ENCODE measurements at regions of chr3 and their contacts with region 1.

Region 1: GRCh38 chr3:159804726-159805410 is 183.8 kb upstream of the IL12A start:
- DNase-seq: peak; percentile 84
- H3K4me3 Mint-ChIP-seq: no peak overlapping the region
- H3K27ac Mint-ChIP-seq: no peak overlapping the region
- H3K4me1 Mint-ChIP-seq: peaks cover 37% of the 10 kb centered on the region
- H3K27me3 Mint-ChIP-seq: no peaks in the 10 kb centered on the region
- CTCF ChIP-seq: peak; percentile 97

Region 2: DNA sequence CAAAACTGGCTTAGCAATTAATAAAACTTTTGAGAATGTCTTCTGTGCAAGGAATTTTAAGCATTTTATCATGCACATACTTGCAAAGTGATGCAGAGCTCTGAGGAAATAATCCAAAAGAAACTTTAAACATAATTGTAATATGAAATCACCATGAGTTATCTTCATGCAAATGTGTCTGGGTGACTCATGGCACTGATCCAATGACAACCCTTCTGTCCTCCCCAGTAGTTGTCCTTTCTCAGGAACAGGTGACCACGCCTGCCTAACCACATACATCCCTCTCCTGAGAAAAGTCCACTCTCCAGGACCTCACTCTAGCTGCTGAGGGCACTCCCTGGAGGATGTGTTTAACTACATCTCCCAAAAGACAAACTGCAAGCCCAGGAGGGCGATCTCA is 346.9 kb before region 1 on chr3:
- CTCF ChIA-PET with region 1: interaction called, 3 read pairs
- intact Hi-C with region 1: loop called (anchors 10 kb)
- DNase-seq: peak; percentile 88
- H3K4me3 Mint-ChIP-seq: peak overlapping the region; percentile 55
- H3K27ac Mint-ChIP-seq: peak overlapping the region; percentile 86
- H3K4me1 Mint-ChIP-seq: peaks cover 73% of the 10 kb centered on the region
- H3K27me3 Mint-ChIP-seq: no peaks in the 10 kb centered on the region
- CTCF ChIP-seq: no peak

Region 3: GRCh38 chr3:159637883-159638542 is 166.9 kb before region 1 on chr3:
- CTCF ChIA-PET with region 1: interaction called, 5 read pairs
- intact Hi-C with region 1: loop called (anchors 1 kb)
- DNase-seq: peak; percentile 66
- H3K4me3 Mint-ChIP-seq: no peak overlapping the region
- H3K27ac Mint-ChIP-seq: no peak overlapping the region
- H3K4me1 Mint-ChIP-seq: peaks cover 52% of the 10 kb centered on the region
- H3K27me3 Mint-ChIP-seq: no peaks in the 10 kb centered on the region
- CTCF ChIP-seq: no peak

Region 4: DNA sequence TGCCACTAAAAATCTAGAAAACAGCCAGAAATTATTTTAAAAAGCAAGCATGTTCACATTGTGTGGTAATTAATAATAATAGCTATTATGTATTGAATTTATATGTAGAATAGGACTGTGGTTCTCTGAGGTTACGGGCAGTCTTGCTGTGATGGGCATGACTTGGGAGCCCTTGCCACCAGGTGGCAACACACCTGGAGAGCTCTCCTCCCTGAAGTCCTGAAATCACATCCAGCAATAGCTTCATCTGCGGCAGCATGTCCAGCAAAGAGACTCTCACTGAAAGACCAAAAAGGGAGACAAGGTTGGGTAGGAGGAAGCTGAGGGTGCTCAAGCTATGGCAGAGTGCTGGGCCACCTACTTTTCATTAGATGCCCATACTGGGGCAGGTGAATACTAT is 23.0 kb before region 1 on chr3:
- CTCF ChIA-PET with region 1: interaction called, 42 read pairs
- intact Hi-C with region 1: loop called (anchors 1 kb)
- DNase-seq: peak; percentile 48
- H3K4me3 Mint-ChIP-seq: no peak overlapping the region
- H3K27ac Mint-ChIP-seq: no peak overlapping the region
- H3K4me1 Mint-ChIP-seq: peaks cover 42% of the 10 kb centered on the region
- H3K27me3 Mint-ChIP-seq: no peaks in the 10 kb centered on the region
- CTCF ChIP-seq: peak; percentile 73

Region 5: DNA sequence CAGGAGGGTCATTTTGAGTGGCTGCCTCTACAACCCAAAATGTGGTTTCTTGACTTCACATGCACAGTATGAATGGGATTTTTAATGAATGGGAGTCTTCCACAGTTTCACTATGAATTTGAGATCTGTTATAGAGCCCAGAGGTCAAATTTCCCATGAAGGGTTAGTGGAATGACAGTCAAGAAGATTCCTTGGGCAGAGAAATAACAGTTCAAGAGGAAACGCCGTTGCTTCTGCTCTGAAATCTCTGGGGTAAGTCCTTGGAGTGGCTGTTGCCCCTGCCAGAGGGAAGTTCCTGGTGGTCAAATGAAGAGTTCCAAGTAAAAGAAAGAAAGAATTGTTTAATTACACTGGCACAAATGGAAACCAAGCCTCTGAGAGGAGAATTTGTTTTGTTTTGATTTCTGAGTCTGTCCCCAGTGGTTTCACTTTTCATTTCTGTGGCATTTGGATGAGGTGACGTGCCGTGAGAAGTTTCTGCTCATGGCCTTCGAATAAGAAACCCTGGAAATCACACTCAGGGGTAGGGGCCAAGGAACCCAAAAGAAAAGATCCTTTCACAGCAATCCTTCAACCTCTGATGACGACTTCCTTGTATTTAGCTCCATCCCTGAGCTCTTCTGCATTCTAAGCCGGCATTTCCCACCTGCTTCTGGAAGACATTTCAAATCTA is 106.3 kb after region 1 on chr3:
- CTCF ChIA-PET with region 1: no interaction called
- intact Hi-C with region 1: no loop called
- DNase-seq: peak; percentile 24
- H3K4me3 Mint-ChIP-seq: peak overlapping the region; percentile 56
- H3K27ac Mint-ChIP-seq: peak overlapping the region; percentile 2
- H3K4me1 Mint-ChIP-seq: peaks cover 24% of the 10 kb centered on the region
- H3K27me3 Mint-ChIP-seq: no peaks in the 10 kb centered on the region
- CTCF ChIP-seq: no peak

Measured in Calu3 (cell line).